ENCODE measurements at regions of chr1 and their contacts with region 1.

Region 1: GRCh38 chr1:35451125-35451528 is 106.1 kb downstream of the KIAA0319L start:
- DNase-seq: peak; percentile 89
- ATAC-seq: peak; percentile 92
- H3K4me3 Mint-ChIP-seq: no peak overlapping the region
- H3K27ac Mint-ChIP-seq: no peak overlapping the region
- H3K4me1 Mint-ChIP-seq: peaks cover 32% of the 10 kb centered on the region
- H3K27me3 Mint-ChIP-seq: no peaks in the 10 kb centered on the region
- CTCF ChIP-seq: peak; percentile 74

Region 2: DNA sequence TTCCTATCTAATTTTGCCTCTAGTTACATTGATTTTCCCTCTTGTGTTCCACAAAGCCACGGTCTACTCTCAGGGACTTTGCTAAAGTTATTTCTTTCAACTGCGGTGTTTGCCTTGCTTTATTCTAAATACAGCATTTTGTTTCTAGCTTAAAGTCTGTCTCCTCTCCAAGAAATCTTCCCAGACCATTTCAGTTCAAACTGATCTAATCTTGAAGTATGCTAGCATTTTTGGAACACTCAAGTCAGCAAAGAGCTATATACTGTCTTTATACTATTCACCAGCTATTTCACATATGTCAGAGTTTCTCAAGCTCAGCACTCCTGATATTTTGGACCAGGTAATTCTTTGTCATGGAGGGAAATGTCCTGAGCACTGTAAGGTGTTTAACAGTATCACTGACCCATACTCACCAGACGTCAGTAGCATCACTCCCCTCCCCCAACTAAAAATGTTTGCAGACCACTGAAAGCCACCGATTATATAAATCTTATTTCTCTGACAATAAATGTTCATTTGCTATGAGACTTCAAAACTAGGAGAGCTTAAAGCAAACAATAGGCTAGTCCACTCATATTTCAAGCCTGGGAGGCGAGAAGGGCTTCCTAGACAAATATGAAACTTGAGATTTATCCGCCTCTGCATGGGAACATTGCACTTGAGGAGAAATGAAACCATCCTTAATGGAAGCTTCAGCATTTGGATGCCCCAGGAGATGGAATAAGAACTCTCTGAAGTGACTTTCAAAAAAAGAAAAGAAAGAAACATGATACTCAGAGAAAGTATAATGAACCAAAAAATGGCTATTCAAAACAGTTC is 24.9 kb after region 1 on chr1:
- CTCF ChIA-PET with region 1: interaction called, 14 read pairs
- POLR2A ChIA-PET with region 1: no interaction called
- intact Hi-C with region 1: no loop called
- DNase-seq: no peak
- ATAC-seq: no peak
- H3K4me3 Mint-ChIP-seq: no peak overlapping the region
- H3K27ac Mint-ChIP-seq: no peak overlapping the region
- H3K4me1 Mint-ChIP-seq: peaks cover 3% of the 10 kb centered on the region
- H3K27me3 Mint-ChIP-seq: no peaks in the 10 kb centered on the region
- CTCF ChIP-seq: no peak

Region 3: GRCh38 chr1:35505908-35506798 is 55.0 kb after region 1 on chr1:
- CTCF ChIA-PET with region 1: interaction called, 14 read pairs
- POLR2A ChIA-PET with region 1: interaction called, 4 read pairs
- intact Hi-C with region 1: no loop called
- DNase-seq: peak; percentile 69
- ATAC-seq: peak; percentile 82
- H3K4me3 Mint-ChIP-seq: peak overlapping the region; percentile 16
- H3K27ac Mint-ChIP-seq: peak overlapping the region; percentile 88
- H3K4me1 Mint-ChIP-seq: peaks cover 50% of the 10 kb centered on the region
- H3K27me3 Mint-ChIP-seq: no peaks in the 10 kb centered on the region
- CTCF ChIP-seq: no peak

Region 4: DNA sequence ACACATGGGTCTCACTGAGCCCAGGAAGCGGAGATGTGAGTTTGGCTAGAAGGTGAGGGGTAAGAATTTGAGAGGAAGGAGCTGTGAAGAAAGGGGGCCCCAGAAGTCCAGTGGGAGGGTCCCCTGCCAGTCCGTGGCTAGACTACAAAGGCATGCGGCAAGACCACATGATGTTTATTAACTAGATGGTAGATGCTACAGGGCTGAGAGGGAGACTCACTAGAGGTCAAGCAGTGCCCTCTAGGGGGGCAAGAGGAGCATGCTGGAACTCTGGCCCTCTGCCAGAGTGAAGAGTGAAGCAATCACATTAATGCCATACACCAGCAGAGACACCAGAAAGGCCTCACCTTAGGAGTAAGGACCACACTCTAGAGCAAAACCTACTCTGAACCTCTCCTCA is 93.9 kb after region 1 on chr1:
- CTCF ChIA-PET with region 1: interaction called, 140 read pairs
- POLR2A ChIA-PET with region 1: interaction called, 4 read pairs
- intact Hi-C with region 1: loop called (anchors 1 kb)
- DNase-seq: peak; percentile 76
- ATAC-seq: peak; percentile 93
- H3K4me3 Mint-ChIP-seq: no peak overlapping the region
- H3K27ac Mint-ChIP-seq: peak overlapping the region; percentile 50
- H3K4me1 Mint-ChIP-seq: peaks cover 51% of the 10 kb centered on the region
- H3K27me3 Mint-ChIP-seq: no peaks in the 10 kb centered on the region
- CTCF ChIP-seq: peak; percentile 41

Region 5: GRCh38 chr1:35577071-35577998 is 126.2 kb after region 1 on chr1:
- CTCF ChIA-PET with region 1: interaction called, 10 read pairs
- POLR2A ChIA-PET with region 1: no interaction called
- intact Hi-C with region 1: no loop called
- DNase-seq: peak; percentile 81
- ATAC-seq: peak; percentile 92
- H3K4me3 Mint-ChIP-seq: peak overlapping the region; percentile 81
- H3K27ac Mint-ChIP-seq: peak overlapping the region; percentile 87
- H3K4me1 Mint-ChIP-seq: peaks cover 20% of the 10 kb centered on the region
- H3K27me3 Mint-ChIP-seq: peaks cover 10% of the 10 kb centered on the region
- CTCF ChIP-seq: no peak